Head of caudate nucleus (tissue), 42 donors: ENCODE measurements at regions of chr1 and their contacts with region 1.

Region 1: GRCh38 chr1:25796811-25797458 is 3.1 kb upstream of the SELENON start:
- DNase-seq: peak; percentile 76 to 94 (median 88)

Region 2: DNA sequence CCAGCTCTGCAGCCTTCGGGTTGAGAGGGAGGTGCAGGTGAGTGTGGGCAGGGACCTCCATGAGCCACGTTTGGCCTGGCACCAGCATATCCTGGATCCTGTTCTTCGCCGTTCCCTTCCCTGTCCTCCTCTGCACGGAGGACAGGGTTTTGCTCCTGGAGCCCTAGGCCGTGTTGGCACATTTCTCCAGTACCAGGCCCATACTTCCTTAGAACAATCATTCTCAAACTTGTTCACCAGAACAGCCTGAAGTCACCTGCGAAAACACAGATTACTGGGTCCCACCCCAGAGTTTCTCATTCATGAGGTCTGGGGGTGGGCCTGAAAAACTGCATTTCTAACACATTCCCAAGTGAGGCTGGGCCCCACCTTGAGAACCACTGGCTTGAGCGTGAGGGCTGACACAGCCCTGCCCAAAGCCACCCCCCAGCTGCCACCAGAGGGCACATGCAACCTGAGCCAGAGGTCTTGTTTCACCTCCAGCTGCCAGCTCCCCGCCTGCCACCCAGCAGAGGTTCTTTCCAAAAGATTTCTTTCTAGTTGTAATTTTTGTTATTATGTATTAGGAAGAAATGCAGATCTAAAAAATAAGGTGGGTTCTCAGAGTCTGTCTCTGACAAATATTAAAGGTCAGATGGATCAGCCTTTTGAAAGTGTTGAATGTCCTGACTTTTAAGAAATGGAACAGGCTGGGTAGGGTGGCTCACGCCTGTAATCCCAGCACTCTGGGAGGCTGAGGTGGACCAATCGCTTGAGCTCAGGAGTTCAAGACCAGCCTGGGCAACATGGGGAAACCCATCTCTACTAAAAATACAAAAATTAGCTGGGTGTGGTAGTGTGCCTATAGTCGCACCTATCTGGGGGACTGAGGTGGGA is 293.1 kb before region 1 on chr1:
- intact Hi-C with region 1: loop called (anchors 10 kb)
- DNase-seq: peak in 40 of 42 donors; percentile 24 to 75 (median 54)

Region 3: DNA sequence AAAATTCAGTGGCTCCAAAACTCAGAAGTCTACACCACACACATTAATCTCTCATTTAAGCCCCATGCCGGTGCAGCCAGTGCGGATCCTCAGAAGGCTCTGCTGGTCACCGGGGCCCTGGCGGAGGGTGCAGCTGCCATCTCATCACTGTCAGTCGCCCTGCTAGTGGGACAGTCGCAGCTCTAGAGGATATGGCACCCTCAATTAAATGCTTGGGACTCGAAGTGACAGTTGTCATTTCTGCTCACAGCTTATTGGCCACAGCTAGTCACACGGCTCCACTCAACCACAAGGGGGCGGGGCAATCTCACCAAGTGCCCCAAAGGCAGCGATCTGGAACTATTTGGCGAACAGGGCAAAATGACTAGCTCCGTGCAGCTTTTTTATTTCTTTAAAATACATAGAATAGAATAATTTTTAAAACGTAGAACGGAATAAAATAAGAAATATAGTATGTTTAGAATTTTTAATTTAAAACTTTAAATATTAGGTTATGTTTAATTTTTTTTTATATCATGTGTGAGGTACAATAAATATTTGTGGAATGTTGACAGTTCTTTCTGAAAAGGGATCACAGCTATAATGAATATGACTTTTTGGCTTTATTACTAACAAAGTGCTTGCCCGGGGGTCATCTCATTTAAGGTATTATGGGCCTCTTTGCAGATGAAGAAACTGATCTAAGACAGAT is 188.3 kb before region 1 on chr1:
- intact Hi-C with region 1: loop called (anchors 5 kb)
- DNase-seq: peak; percentile 82 to 96 (median 91)